ENCODE measurements at regions of chr22 and their contacts with region 1.

Region 1: GRCh38 chr22:36331306-36331911 is 56.4 kb downstream of the MYH9 start:
- H3K4me3 ChIP-seq: no peak overlapping the region
- H3K27ac ChIP-seq: peak overlapping the region; percentile 85
- H3K4me1 ChIP-seq: peaks cover 48% of the 10 kb centered on the region
- CTCF ChIP-seq: no peak; the same call in 1 of the 2 replicates

Region 2: GRCh38 chr22:36028646-36029405 is 302.6 kb before region 1 on chr22 and contains the start of gene RBFOX2:
- CTCF ChIA-PET with region 1: no interaction called
- POLR2A ChIA-PET with region 1: no interaction called
- H3K4me3 ChIP-seq: peak within 1 kb of the TSS; percentile 84
- H3K27ac ChIP-seq: peak within 1 kb of the TSS; percentile 77; the same call in 1 of the 2 replicates
- H3K4me1 ChIP-seq: peaks cover 9% of the 10 kb centered on the region
- CTCF ChIP-seq: no peak

Region 3: DNA sequence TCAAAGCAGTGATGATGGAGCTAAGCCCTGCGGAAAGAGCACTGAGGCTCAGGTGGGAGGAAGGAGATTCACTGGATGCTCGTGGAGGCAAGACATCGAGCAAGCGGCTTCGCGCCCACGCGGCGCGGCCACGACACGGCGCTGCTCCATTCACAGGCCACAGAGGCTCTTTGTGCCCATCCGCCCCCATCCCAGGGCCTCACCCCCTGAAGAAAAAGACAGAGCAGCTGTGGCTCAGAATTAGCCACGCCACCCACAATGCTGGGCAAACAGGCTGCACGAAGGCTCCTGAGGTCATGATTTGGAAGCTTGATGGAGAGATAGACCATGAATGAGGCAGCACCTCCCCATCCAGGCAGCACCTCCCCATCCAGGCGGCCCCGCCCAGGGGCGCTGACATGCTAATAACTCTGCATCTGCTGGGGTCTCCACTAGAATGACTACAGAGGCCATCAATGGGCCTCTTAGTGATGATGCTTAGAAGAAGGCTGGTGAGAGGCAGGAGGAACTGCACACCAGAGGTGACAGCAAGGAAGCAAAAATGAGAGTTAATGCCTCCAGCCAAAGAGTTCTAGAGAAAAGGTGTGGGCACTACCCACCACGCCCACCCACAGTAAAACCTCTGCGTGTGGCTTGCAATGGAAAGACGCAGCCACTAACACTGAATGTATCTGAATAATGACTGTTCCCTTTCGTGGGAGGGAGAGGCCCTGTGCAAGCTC is 12.9 kb after region 1 on chr22:
- CTCF ChIA-PET with region 1: interaction called, 4 read pairs
- POLR2A ChIA-PET with region 1: interaction called, 12 read pairs
- H3K4me3 ChIP-seq: no peak overlapping the region
- H3K27ac ChIP-seq: no peak overlapping the region
- H3K4me1 ChIP-seq: no peaks in the 10 kb centered on the region
- CTCF ChIP-seq: no peak

Region 4: DNA sequence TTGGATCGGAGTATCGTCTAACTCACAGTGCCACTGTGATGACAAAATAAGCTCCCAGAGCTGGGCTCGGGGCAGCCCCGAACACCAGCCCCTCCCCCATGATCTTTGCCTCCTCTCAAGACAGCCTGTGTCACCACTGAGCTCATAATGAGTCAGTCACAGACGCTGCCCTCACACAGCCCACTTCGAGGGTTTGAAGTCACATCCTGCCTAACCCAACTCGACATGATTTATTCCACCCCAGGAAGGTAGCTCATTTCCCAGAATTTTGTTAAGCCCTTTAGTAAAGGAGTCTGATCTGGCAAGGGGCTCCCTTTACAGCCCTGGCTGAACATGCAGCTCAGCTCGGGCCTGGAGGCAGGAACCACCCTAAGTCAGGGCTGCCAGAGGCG is 33.6 kb after region 1 on chr22:
- CTCF ChIA-PET with region 1: interaction called, 3 read pairs
- POLR2A ChIA-PET with region 1: interaction called, 11 read pairs
- H3K4me3 ChIP-seq: no peak overlapping the region
- H3K27ac ChIP-seq: no peak overlapping the region
- H3K4me1 ChIP-seq: peaks cover 57% of the 10 kb centered on the region
- CTCF ChIP-seq: no peak

Region 5: GRCh38 chr22:36461669-36462649 is 130.6 kb after region 1 on chr22:
- CTCF ChIA-PET with region 1: interaction called, 57 read pairs
- POLR2A ChIA-PET with region 1: interaction called, 23 read pairs
- H3K4me3 ChIP-seq: no peak overlapping the region
- H3K27ac ChIP-seq: peak overlapping the region; percentile 8; the same call in 1 of the 2 replicates
- H3K4me1 ChIP-seq: peaks cover 18% of the 10 kb centered on the region
- CTCF ChIP-seq: no peak

Measured in HEK293 (cell line).